CD8-positive, alpha-beta memory T cell (primary cell): ENCODE measurements at regions of chr7 and their contacts with region 1.

Region 1: GRCh38 chr7:105413887-105414437 is 25.2 kb upstream of the SRPK2 start:
- DNase-seq: no peak
- H3K4me3 ChIP-seq: no peak overlapping the region
- H3K4me3 Mint-ChIP-seq: no peak overlapping the region
- H3K27ac ChIP-seq: no peak overlapping the region
- H3K27ac Mint-ChIP-seq: no peak overlapping the region
- H3K4me1 ChIP-seq: no peaks in the 10 kb centered on the region
- H3K4me1 Mint-ChIP-seq: peaks cover 0 to 8% (median 5%) of the 10 kb centered on the region in 3 donors
- H3K27me3 ChIP-seq: no peaks in the 10 kb centered on the region
- H3K27me3 Mint-ChIP-seq: no peaks in the 10 kb centered on the region

Region 2: GRCh38 chr7:105399043-105399725 is 14.8 kb before region 1 on chr7:
- CTCF ChIA-PET with region 1: interaction called, 3 read pairs
- POLR2A ChIA-PET with region 1: interaction called, 10 read pairs
- DNase-seq: no peak
- H3K4me3 ChIP-seq: no peak overlapping the region
- H3K4me3 Mint-ChIP-seq: no peak overlapping the region
- H3K27ac ChIP-seq: no peak overlapping the region
- H3K27ac Mint-ChIP-seq: no peak overlapping the region
- H3K4me1 ChIP-seq: no peaks in the 10 kb centered on the region
- H3K4me1 Mint-ChIP-seq: peaks cover 0 to 1% (median 0%) of the 10 kb centered on the region in 3 donors
- H3K27me3 ChIP-seq: no peaks in the 10 kb centered on the region
- H3K27me3 Mint-ChIP-seq: no peaks in the 10 kb centered on the region